Mammary epithelial cell (primary cell): ENCODE measurements at regions of chr16 and their contacts with region 1.

Region 1: GRCh38 chr16:79770244-79771064 is 169.9 kb upstream of the MAF start:
- DNase-seq: peak; percentile 88
- H3K4me3 ChIP-seq: peak overlapping the region; percentile 59 to 62 (median 61)
- H3K27ac ChIP-seq: peak overlapping the region; percentile 30
- H3K4me1 ChIP-seq: peaks cover 28% of the 10 kb centered on the region
- H3K27me3 ChIP-seq: no peaks in the 10 kb centered on the region
- CTCF ChIP-seq: peak in 1 of 2 donors; percentile 18

Region 2: DNA sequence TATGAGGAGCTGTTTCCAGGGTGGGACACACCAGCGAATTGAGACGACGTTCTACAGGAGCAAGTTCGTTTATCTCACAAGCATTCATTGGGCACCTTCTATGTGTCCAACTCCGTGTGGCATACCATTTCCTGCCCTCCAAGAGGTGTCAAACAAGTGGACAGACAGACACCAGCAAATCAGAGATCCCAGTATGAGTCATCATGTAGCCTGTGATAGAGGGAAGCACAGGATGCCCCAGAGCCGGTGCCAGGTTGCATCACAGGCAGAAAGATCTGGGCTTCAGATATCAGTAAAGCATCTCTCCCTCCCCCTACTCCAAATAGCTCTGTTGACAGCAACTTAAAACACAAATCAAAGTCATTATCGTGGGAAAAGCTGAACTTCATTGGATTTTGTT is 138.2 kb before region 1 on chr16:
- CTCF ChIA-PET with region 1: no interaction called
- dilution Hi-C with region 1: no loop called
- in situ Hi-C with region 1: no loop called
- intact Hi-C with region 1: no loop called
- DNase-seq: peak; percentile 60
- H3K4me3 ChIP-seq: no peak overlapping the region
- H3K27ac ChIP-seq: no peak overlapping the region
- H3K4me1 ChIP-seq: peaks cover 27% of the 10 kb centered on the region
- H3K27me3 ChIP-seq: no peaks in the 10 kb centered on the region
- CTCF ChIP-seq: no peak

Region 3: DNA sequence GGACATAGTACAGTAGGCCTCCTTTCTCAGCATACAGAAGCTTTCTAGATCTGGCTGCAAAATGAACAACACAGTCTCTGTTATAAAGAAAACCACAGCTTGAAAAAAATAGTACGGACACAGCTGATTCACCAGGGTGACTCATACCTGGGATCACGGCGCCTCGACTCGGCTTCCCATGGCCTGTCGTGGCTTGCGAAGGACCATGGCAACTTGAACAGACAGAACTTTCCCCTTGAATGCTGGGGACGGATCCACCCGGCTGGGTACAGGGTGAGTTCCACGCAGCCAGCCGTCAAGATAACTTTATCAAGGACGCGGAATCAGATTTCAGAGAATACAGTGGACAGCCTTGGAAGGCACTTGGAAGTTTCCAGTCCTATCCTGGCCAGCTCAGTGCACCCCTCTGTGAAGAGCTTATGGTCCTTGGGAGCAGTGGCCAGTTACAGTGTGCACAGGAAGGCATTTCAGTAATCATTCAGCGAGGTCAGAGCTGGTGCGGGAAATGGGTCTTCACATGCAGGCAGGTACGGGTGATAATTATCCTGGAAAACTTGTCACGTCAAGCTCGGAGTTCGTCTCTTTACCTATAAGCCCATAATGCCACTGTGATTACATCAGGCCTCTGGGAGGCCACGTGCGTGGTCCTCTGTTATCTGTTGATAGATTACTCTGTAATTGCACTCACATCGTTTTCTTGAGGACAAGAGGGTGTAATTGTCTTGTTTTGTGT is 112.0 kb before region 1 on chr16:
- CTCF ChIA-PET with region 1: no interaction called
- dilution Hi-C with region 1: no loop called
- in situ Hi-C with region 1: no loop called
- intact Hi-C with region 1: loop called (anchors 5 kb)
- DNase-seq: peak; percentile 97
- H3K4me3 ChIP-seq: peak overlapping the region in 1 of 3 experiments; percentile 14
- H3K27ac ChIP-seq: peak overlapping the region; percentile 87
- H3K4me1 ChIP-seq: peaks cover 39% of the 10 kb centered on the region
- H3K27me3 ChIP-seq: no peaks in the 10 kb centered on the region
- CTCF ChIP-seq: no peak

Region 4: DNA sequence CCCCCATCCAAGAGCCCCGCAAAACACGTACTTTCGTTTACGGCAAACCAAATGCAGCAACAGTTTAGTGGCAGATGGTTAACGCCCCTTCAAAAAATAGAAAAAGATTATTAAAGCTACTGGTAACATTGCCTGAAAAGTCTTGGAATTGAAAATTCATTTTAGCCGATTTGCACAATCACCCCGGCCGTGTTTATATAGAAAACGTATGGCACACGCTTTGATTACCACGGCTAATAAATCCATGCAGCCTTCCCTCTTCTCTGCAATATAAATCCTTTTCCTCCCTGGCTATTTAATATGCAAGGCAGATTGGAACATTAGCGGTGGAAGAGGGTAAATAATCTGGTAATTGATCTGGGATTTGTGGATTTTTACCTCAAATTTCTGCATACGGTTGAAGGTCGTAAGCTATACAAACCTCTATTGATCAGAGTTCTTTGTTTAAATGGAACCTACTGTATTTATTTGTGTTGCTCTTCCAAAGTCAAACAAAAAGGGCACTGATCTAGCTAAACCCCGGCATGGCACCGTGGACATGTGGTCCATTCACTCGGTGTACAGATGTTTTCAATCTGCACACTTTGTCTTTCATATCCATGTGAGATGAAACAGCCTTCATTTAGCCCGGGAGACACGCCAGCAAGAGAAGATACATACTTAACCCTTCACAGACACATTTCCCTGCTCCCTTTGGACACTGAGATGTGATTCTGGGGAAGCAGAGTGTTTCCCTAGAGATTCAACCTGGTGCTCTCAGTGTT is 68.2 kb after region 1 on chr16:
- CTCF ChIA-PET with region 1: no interaction called
- dilution Hi-C with region 1: no loop called
- in situ Hi-C with region 1: no loop called
- intact Hi-C with region 1: no loop called
- DNase-seq: no peak
- H3K4me3 ChIP-seq: no peak overlapping the region
- H3K27ac ChIP-seq: no peak overlapping the region
- H3K4me1 ChIP-seq: no peaks in the 10 kb centered on the region
- H3K27me3 ChIP-seq: no peaks in the 10 kb centered on the region
- CTCF ChIP-seq: no peak

Region 5: DNA sequence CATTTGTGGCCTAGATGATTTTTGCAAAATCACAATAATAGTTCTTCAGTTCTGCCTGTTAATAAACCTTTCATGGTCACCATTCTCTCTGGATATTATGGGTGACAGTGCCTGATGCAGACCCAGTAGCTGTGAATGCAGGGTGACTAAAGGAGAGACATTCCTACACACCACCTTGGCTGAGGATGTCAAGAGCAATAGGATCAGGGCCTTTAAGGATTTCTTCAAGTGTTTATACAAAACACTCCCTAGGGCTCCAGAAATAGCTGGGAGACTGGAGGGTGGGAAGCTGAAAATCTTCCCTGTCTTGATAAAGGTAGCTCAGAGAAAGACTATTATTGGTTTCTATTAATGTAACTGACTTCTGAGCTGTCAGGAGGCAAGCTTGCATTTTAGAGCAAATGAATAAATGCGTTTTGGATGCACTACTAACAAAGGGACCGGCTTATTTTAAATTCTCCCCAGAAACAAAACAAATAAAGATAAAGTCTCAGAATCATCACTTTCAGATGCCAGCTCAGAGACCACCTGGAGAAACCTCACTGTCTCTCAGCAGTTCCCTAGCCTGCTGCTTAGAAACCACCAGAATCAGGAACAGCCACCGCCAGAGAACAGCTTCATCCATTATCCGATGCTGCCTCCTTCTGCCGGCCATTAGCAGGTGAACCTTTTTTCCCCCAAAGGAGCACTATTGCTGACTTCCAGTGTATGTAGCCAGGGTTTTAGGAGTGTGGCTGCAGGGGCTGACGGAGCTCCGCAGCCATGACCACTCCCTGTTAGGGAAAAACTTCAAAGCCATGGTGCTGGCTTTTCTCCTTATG is 598.9 kb after region 1 on chr16:
- CTCF ChIA-PET with region 1: interaction called, 4 read pairs
- dilution Hi-C with region 1: no loop called
- in situ Hi-C with region 1: no loop called
- intact Hi-C with region 1: loop called (anchors 5 kb)
- DNase-seq: peak; percentile 39
- H3K4me3 ChIP-seq: no peak overlapping the region
- H3K27ac ChIP-seq: no peak overlapping the region
- H3K4me1 ChIP-seq: peaks cover 4% of the 10 kb centered on the region
- H3K27me3 ChIP-seq: no peaks in the 10 kb centered on the region
- CTCF ChIP-seq: peak; percentile 70 to 85